Panc1 (cell line): ENCODE measurements at regions of chr16 and their contacts with region 1.

Region 1: GRCh38 chr16:31402687-31403086 is 9.6 kb downstream of the ITGAD start:
- DNase-seq: no peak
- ATAC-seq: no peak
- H3K4me3 ChIP-seq: no peak overlapping the region
- H3K27ac ChIP-seq: no peak overlapping the region
- H3K4me1 ChIP-seq: no peaks in the 10 kb centered on the region
- H3K27me3 ChIP-seq: no peaks in the 10 kb centered on the region
- CTCF ChIP-seq: no peak

Region 2: DNA sequence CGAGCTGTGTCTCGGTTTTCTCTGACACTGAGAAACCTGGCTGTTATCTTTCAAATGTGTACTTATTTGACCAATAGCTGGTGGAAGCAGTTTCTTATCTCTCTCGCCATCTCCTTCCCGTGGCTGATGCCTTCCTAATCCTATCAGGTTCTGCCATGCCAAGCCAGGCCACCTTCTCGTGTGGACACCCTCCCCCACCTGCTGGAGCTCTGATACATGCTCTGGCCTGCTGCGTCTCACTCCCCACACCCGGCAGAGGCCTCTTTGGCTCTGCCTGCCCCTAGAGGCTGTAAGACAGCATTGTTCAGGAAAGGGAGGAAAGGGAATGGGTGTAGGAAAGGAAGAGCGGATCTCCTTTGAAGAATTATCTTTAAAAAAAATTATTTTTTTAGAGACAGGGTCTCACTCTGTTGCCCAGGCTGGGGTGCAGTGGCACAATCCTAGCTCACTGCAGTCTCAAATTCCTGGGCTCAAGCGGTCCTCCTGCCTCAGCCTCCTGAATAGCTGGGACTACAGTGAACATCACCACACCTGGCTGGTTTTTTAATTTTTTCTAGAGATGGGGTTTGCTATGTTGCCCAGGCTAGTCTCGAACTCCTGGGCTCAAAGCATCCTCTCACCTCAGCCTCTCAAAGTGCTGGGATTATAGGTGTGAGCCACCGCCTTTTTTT is 49.1 kb after region 1 on chr16:
- CTCF ChIA-PET with region 1: no interaction called
- POLR2A ChIA-PET with region 1: interaction called, 12 read pairs
- in situ Hi-C with region 1: no loop called
- intact Hi-C with region 1: no loop called
- DNase-seq: no peak
- ATAC-seq: peak; percentile 91
- H3K4me3 ChIP-seq: no peak overlapping the region
- H3K27ac ChIP-seq: no peak overlapping the region
- H3K4me1 ChIP-seq: peaks cover 43% of the 10 kb centered on the region
- H3K27me3 ChIP-seq: no peaks in the 10 kb centered on the region
- CTCF ChIP-seq: peak; percentile 84